ENCODE measurements at regions of chr1 and their contacts with region 1.

Region 1: DNA sequence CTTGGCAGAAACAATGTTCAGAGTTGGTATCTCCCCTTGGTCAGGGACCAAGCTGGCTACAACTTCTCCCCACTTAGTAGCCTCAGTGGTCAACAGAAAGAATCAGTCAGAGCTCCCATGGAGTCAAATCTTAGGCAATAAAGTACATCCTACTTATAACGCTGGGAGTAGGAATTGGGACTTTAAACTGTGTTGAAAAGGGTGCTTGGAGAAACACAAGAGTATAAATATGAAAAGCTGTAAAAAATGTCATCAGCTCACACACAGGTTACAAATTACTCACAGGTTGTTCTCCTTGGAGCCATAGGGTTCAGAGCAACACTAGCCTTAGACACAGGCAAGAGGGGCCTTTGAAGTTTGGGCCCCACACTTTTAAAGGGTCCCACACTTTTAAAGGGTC is 67.4 kb downstream of the WLS start:
- DNase-seq: no peak
- H3K4me3 ChIP-seq: no peak overlapping the region
- H3K27ac ChIP-seq: no peak overlapping the region
- H3K4me1 ChIP-seq: no peaks in the 10 kb centered on the region
- H3K27me3 ChIP-seq: no peaks in the 10 kb centered on the region
- CTCF ChIP-seq: no peak
- POLR2A ChIP-seq: no peak

Region 2: DNA sequence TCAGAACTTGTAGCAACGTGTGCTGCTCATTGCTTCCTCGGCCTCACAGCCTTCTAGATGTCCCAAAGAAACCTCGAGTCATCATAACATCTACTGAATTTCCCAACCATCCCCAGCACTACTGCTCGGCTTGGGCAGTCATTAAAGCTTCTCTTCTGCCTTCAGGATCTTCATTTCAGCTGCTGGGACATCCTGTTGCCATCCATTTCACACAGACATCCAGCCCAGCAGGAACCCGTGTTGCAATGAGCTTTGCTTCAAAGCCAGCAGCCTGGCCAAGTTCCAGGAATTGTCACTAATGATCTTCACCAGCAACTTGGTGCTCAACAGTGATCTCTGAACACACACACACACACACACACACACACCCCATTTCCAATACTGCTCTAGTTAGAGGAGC is 48.9 kb after region 1 on chr1:
- CTCF ChIA-PET with region 1: no interaction called
- POLR2A ChIA-PET with region 1: interaction called, 11 read pairs
- dilution Hi-C with region 1: no loop called
- intact Hi-C with region 1: no loop called
- DNase-seq: peak; percentile 64
- H3K4me3 ChIP-seq: no peak overlapping the region
- H3K27ac ChIP-seq: no peak overlapping the region
- H3K4me1 ChIP-seq: peaks cover 20% of the 10 kb centered on the region
- H3K27me3 ChIP-seq: no peaks in the 10 kb centered on the region
- CTCF ChIP-seq: no peak
- POLR2A ChIP-seq: no peak

Measured in endothelial cell of umbilical vein (primary cell).